CD8-positive, alpha-beta memory T cell (primary cell): ENCODE measurements at regions of chr7 and their contacts with region 1.

Region 1: GRCh38 chr7:102412548-102412947 is 16.4 kb downstream of the PRKRIP1 start:
- DNase-seq: peak in 2 of 5 donors; percentile 23 to 58
- H3K4me3 ChIP-seq: no peak overlapping the region
- H3K4me3 Mint-ChIP-seq: no peak overlapping the region
- H3K27ac ChIP-seq: no peak overlapping the region
- H3K27ac Mint-ChIP-seq: peak overlapping the region in 6 of 8 donors; percentile 34 to 83 (median 74)
- H3K4me1 ChIP-seq: peaks cover 40% of the 10 kb centered on the region
- H3K4me1 Mint-ChIP-seq: peaks cover 34 to 44% (median 41%) of the 10 kb centered on the region in 3 donors
- H3K27me3 ChIP-seq: no peaks in the 10 kb centered on the region
- H3K27me3 Mint-ChIP-seq: no peaks in the 10 kb centered on the region

Region 2: DNA sequence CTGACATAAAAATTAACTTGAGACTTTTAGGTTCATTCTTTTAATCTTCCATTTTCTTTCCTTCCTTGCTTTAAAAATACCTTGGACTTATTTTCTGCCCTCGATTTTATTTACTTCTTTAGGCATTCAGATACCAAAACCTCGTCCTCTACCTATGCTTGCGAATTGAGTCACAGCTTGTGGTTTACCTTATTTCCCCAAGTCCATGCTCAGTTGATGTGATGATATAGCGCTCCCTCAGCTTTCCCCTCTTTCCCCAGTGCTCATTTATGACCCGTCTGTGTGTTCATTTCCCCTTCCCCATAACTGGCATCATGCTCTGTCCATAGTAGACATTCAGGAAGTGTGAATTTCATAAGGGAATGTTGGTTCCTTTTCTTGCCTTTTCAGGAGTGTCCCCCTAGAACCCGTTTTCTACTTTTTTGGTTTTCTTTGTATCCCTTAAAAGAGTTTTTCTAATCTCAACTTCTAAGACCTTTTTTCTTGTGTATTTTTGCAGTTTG is 35.5 kb before region 1 on chr7:
- CTCF ChIA-PET with region 1: no interaction called
- POLR2A ChIA-PET with region 1: no interaction called
- DNase-seq: no peak
- H3K4me3 ChIP-seq: no peak overlapping the region
- H3K4me3 Mint-ChIP-seq: no peak overlapping the region
- H3K27ac ChIP-seq: no peak overlapping the region
- H3K27ac Mint-ChIP-seq: peak overlapping the region in 5 of 8 donors; percentile 4 to 71 (median 38)
- H3K4me1 ChIP-seq: no peaks in the 10 kb centered on the region
- H3K4me1 Mint-ChIP-seq: peaks cover 6 to 11% (median 8%) of the 10 kb centered on the region in 3 donors
- H3K27me3 ChIP-seq: no peaks in the 10 kb centered on the region
- H3K27me3 Mint-ChIP-seq: no peaks in the 10 kb centered on the region

Region 3: DNA sequence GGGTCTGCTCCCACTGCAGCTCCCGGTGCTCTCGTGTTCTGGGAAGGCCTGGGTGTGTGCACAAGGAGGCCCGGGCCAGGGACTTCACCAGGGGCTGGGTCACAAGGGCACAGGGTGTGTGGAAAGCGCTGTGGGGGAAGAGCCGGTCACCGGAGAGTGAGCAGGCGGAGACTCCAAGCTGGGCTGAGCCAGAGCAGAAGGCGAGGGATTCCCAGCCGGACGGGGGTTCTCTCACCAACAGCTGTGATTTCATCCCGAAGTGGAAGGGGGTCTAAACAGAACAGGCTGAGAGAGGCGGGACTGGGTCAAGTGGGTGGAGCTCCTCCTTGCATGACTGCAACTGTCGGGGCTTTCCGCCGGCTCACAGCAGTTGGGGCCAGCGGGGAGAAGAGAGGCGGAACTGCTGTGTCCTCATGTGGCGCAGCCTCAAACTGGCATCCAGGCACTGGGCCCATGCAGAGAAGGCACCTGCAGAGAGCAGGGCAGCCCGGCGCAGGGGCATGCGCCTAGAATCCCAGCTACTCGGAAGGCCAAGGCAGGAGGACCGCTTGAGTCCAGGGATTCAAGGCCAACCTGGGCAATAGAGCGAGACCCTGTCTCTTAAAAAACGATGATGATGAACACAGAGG is 13.2 kb after region 1 on chr7:
- CTCF ChIA-PET with region 1: interaction called, 14 read pairs
- POLR2A ChIA-PET with region 1: interaction called, 22 read pairs
- DNase-seq: peak; percentile 80 to 91 (median 81)
- H3K4me3 ChIP-seq: peak overlapping the region; percentile 62
- H3K4me3 Mint-ChIP-seq: peak overlapping the region; percentile 77 to 95 (median 90)
- H3K27ac ChIP-seq: peak overlapping the region; percentile 96
- H3K27ac Mint-ChIP-seq: peak overlapping the region; percentile 98 to 100 (median 100)
- H3K4me1 ChIP-seq: peaks cover 84% of the 10 kb centered on the region
- H3K4me1 Mint-ChIP-seq: peaks cover 57 to 81% (median 66%) of the 10 kb centered on the region in 3 donors
- H3K27me3 ChIP-seq: no peaks in the 10 kb centered on the region
- H3K27me3 Mint-ChIP-seq: peaks cover 0 to 2% of the 10 kb centered on the region in 2 donors

Region 4: GRCh38 chr7:102433219-102434038 is 20.9 kb after region 1 on chr7 and contains the start of gene ORAI2:
- CTCF ChIA-PET with region 1: interaction called, 10 read pairs
- POLR2A ChIA-PET with region 1: interaction called, 4 read pairs
- DNase-seq: peak; percentile 85 to 93 (median 85)
- H3K4me3 ChIP-seq: peak within 1 kb of the TSS; percentile 70
- H3K4me3 Mint-ChIP-seq: peak within 1 kb of the TSS; percentile 84 to 93 (median 87)
- H3K27ac ChIP-seq: peak within 1 kb of the TSS; percentile 79
- H3K27ac Mint-ChIP-seq: peak within 1 kb of the TSS; percentile 97 to 100 (median 99)
- H3K4me1 ChIP-seq: peaks cover 57% of the 10 kb centered on the region
- H3K4me1 Mint-ChIP-seq: peaks cover 39 to 62% (median 48%) of the 10 kb centered on the region in 3 donors
- H3K27me3 ChIP-seq: no peaks in the 10 kb centered on the region
- H3K27me3 Mint-ChIP-seq: peaks cover 0 to 2% of the 10 kb centered on the region in 2 donors
- total RNA-seq, gene ORAI2: 66.9 to 68.9 TPM

Region 5: DNA sequence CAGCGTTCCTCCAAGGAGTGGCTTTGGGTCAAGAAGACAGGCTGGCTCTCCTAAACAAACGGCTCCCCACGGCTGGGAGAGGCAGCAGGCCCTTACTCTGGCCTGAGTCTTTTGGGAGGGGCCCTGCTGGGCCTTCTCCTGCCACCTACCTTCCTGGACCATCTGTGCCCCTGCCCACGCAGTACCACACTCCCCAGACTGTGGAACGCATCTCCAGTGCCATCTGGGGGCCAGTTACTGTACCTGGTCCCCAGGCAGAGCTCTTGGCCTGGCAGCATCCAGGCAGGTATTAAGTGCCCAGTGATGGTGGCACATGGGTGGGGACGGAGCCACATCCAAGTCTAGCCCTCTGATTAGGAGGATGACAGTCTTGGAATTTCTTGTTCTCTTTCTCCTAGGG is 37.7 kb after region 1 on chr7:
- CTCF ChIA-PET with region 1: interaction called, 29 read pairs
- POLR2A ChIA-PET with region 1: interaction called, 4 read pairs
- DNase-seq: peak; percentile 25 to 72 (median 36)
- H3K4me3 ChIP-seq: no peak overlapping the region
- H3K4me3 Mint-ChIP-seq: no peak overlapping the region
- H3K27ac ChIP-seq: no peak overlapping the region
- H3K27ac Mint-ChIP-seq: peak overlapping the region in 2 of 8 donors; percentile 37 to 61
- H3K4me1 ChIP-seq: no peaks in the 10 kb centered on the region
- H3K4me1 Mint-ChIP-seq: peaks cover 0 to 4% (median 0%) of the 10 kb centered on the region in 3 donors
- H3K27me3 ChIP-seq: no peaks in the 10 kb centered on the region
- H3K27me3 Mint-ChIP-seq: no peaks in the 10 kb centered on the region